B cell (primary cell): ENCODE measurements at regions of chr19 and their contacts with region 1.

Region 1: GRCh38 chr19:17052439-17053210 is 22.6 kb downstream of the HAUS8 start:
- DNase-seq: peak; percentile 49
- ATAC-seq: no peak
- H3K4me3 ChIP-seq: no peak overlapping the region
- H3K4me3 Mint-ChIP-seq: no peak overlapping the region
- H3K27ac ChIP-seq: no peak overlapping the region
- H3K27ac Mint-ChIP-seq: no peak overlapping the region
- H3K4me1 ChIP-seq: no peaks in the 10 kb centered on the region
- H3K4me1 Mint-ChIP-seq: no peaks in the 10 kb centered on the region
- H3K27me3 ChIP-seq: no peaks in the 10 kb centered on the region
- H3K27me3 Mint-ChIP-seq: no peaks in the 10 kb centered on the region
- CTCF ChIP-seq: peak; percentile 53

Region 2: DNA sequence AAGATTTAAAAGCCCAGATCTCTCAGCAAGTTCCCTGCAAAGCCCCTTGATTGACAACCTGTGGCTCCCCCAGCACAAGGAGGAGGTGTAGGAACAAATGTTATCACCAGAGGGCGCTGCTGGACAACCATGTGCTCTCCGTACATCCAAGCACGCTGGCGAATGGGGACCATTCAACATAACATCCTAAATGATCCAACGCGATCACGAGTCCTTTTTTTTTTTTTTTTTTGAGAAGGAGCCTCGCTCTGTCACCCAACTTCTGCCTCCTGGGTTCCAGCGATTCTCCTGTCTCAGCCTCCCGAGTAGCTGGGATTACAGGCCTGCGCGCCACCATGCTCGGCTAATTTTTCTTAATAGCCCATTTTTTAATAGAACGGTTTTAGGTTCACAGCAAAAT is 281.0 kb before region 1 on chr19:
- CTCF ChIA-PET with region 1: interaction called, 13 read pairs
- POLR2A ChIA-PET with region 1: no interaction called
- intact Hi-C with region 1: loop called (anchors 1 kb)
- DNase-seq: peak; percentile 85
- ATAC-seq: peak; percentile 86
- H3K4me3 ChIP-seq: no peak overlapping the region
- H3K4me3 Mint-ChIP-seq: no peak overlapping the region
- H3K27ac ChIP-seq: no peak overlapping the region
- H3K27ac Mint-ChIP-seq: no peak overlapping the region
- H3K4me1 ChIP-seq: no peaks in the 10 kb centered on the region
- H3K4me1 Mint-ChIP-seq: peaks cover 3% of the 10 kb centered on the region
- H3K27me3 ChIP-seq: peaks cover 0 to 5% (median 1%) of the 10 kb centered on the region in 4 experiments
- H3K27me3 Mint-ChIP-seq: peaks cover 17% of the 10 kb centered on the region
- CTCF ChIP-seq: peak; percentile 86

Region 3: DNA sequence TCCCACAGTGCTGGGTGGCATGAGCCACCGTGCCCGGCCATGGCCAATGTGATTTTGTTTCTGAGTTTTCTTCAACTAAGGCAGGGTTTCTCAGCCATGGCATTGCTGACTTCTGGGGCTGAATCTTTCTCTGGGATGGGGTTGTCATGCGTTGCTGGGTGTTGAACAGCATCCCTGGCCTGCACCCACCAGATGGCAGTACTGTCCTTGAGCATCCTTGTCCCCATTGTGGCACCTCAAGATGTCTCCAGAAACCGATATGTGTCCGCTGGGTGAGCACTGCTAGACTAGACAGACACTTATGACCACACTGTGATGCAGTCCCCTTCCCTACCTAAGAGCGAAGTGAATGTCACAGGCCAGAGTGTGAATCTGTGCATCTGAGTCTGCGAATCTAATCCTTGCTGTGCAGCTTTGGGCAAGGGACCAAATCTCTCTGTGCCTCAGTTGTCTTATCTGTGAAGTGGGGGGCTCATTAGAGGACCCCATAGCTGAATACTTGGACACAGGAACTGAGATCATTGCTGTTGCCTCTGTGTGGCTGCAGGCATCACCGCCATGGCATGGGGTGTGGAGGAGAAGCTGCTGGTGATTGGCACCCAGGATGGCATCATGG is 273.7 kb before region 1 on chr19:
- CTCF ChIA-PET with region 1: interaction called, 8 read pairs
- POLR2A ChIA-PET with region 1: no interaction called
- intact Hi-C with region 1: loop called (anchors 2 kb)
- DNase-seq: peak; percentile 66
- ATAC-seq: peak; percentile 49
- H3K4me3 ChIP-seq: no peak overlapping the region
- H3K4me3 Mint-ChIP-seq: no peak overlapping the region
- H3K27ac ChIP-seq: no peak overlapping the region
- H3K27ac Mint-ChIP-seq: no peak overlapping the region
- H3K4me1 ChIP-seq: no peaks in the 10 kb centered on the region
- H3K4me1 Mint-ChIP-seq: no peaks in the 10 kb centered on the region
- H3K27me3 ChIP-seq: no peaks in the 10 kb centered on the region
- H3K27me3 Mint-ChIP-seq: peaks cover 13% of the 10 kb centered on the region
- CTCF ChIP-seq: peak; percentile 58

Region 4: DNA sequence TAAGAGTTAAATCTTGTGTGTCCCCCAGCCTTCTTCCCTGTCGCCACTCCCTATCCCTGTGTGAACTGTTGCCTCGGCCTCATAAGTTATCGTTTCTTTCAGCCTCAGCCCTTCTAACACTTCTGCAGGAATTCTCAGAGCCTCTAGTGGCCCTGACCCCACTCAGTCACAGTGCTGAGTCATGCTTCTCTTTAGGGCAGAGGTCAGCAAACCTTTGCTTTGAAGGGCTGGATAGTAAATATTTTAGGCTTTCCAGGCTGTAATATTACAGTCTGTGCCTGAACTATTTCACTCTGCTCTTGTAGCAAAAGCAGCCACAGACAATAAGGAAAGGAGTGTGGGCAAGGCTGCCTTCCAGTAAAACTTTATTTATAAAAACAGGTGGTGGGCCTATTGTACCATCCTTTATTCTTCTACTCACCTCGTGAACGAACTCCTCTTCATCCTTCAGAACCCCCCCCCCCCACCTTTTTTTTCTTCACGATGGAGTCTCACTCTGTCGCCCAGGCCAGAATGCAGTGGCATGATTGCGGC is 45.0 kb after region 1 on chr19:
- CTCF ChIA-PET with region 1: no interaction called
- POLR2A ChIA-PET with region 1: no interaction called
- intact Hi-C with region 1: no loop called
- DNase-seq: no peak
- ATAC-seq: no peak
- H3K4me3 ChIP-seq: no peak overlapping the region
- H3K4me3 Mint-ChIP-seq: no peak overlapping the region
- H3K27ac ChIP-seq: no peak overlapping the region
- H3K27ac Mint-ChIP-seq: peak overlapping the region; percentile 2
- H3K4me1 ChIP-seq: peaks cover 0 to 16% of the 10 kb centered on the region in 2 donors
- H3K4me1 Mint-ChIP-seq: peaks cover 39% of the 10 kb centered on the region
- H3K27me3 ChIP-seq: no peaks in the 10 kb centered on the region
- H3K27me3 Mint-ChIP-seq: no peaks in the 10 kb centered on the region
- CTCF ChIP-seq: no peak